Caco-2 (cell line): ENCODE measurements at regions of chr6 and their contacts with region 1.

Region 1: GRCh38 chr6:152484806-152485205 is 152.4 kb downstream of the SYNE1 start:
- DNase-seq: no peak
- H3K4me3 ChIP-seq: no peak overlapping the region
- H3K4me3 Mint-ChIP-seq: no peak overlapping the region
- H3K27ac Mint-ChIP-seq: no peak overlapping the region
- H3K4me1 ChIP-seq: no peaks in the 10 kb centered on the region
- H3K4me1 Mint-ChIP-seq: no peaks in the 10 kb centered on the region
- H3K27me3 ChIP-seq: no peaks in the 10 kb centered on the region
- H3K27me3 Mint-ChIP-seq: peaks cover 4% of the 10 kb centered on the region
- CTCF ChIP-seq: no peak

Region 2: DNA sequence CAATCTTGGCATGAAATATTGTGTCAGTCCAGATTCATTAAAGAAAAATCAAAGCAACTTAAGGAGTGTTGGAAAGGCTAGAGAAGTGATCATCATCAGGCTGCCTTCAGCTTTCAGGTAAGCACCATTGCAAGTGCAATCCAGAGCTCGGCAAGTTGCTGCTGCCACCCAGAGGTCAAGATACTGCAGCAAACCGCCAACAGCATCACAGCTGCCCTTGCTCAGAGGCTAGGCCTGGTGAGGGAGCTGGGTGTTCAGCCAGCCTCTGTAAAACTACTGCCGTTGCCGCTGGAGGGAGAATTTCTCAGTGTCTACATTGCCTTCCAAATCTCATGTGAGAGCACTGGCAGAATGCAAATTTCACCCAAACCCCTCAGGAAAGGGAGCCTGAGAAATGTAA is 158.2 kb after region 1 on chr6:
- CTCF ChIA-PET with region 1: interaction called, 4 read pairs
- POLR2A ChIA-PET with region 1: no interaction called
- intact Hi-C with region 1: loop called (anchors 1 kb)
- DNase-seq: peak; percentile 75 to 78
- H3K4me3 ChIP-seq: no peak overlapping the region
- H3K4me3 Mint-ChIP-seq: no peak overlapping the region
- H3K27ac Mint-ChIP-seq: no peak overlapping the region
- H3K4me1 ChIP-seq: no peaks in the 10 kb centered on the region
- H3K4me1 Mint-ChIP-seq: no peaks in the 10 kb centered on the region
- H3K27me3 ChIP-seq: no peaks in the 10 kb centered on the region
- H3K27me3 Mint-ChIP-seq: peaks cover 27% of the 10 kb centered on the region
- CTCF ChIP-seq: peak; percentile 55 to 79

Region 3: DNA sequence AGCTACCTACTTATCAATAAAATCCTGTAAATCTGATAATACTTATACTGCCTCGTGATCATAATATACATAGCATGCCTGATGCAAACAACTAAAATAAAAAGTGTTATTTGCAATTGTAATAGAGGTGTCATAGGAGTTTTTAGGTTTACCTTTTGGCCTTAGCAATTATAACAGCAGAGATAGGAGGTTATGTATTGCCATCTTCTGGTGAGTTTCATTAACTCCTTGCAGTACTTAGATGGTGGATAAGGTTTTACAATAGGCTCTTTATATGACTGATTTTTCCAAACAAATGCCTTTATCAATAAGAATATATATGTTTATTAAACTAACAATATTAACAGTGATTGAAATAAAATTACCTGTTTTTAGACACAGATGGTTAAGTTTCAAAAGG is 185.1 kb after region 1 on chr6:
- CTCF ChIA-PET with region 1: no interaction called
- POLR2A ChIA-PET with region 1: no interaction called
- intact Hi-C with region 1: loop called (anchors 1 kb)
- DNase-seq: peak in 1 of 2 experiments; percentile 5
- H3K4me3 ChIP-seq: no peak overlapping the region
- H3K4me3 Mint-ChIP-seq: no peak overlapping the region
- H3K27ac Mint-ChIP-seq: no peak overlapping the region
- H3K4me1 ChIP-seq: no peaks in the 10 kb centered on the region
- H3K4me1 Mint-ChIP-seq: no peaks in the 10 kb centered on the region
- H3K27me3 ChIP-seq: no peaks in the 10 kb centered on the region
- H3K27me3 Mint-ChIP-seq: peaks cover 13% of the 10 kb centered on the region
- CTCF ChIP-seq: peak in 1 of 2 experiments; percentile 36

Region 4: GRCh38 chr6:152897799-152898399 is 413.1 kb after region 1 on chr6:
- CTCF ChIA-PET with region 1: no interaction called
- POLR2A ChIA-PET with region 1: no interaction called
- intact Hi-C with region 1: loop called (anchors 2 kb)
- DNase-seq: peak; percentile 65 to 82
- H3K4me3 ChIP-seq: no peak overlapping the region
- H3K4me3 Mint-ChIP-seq: no peak overlapping the region
- H3K27ac Mint-ChIP-seq: no peak overlapping the region
- H3K4me1 ChIP-seq: no peaks in the 10 kb centered on the region
- H3K4me1 Mint-ChIP-seq: no peaks in the 10 kb centered on the region
- H3K27me3 ChIP-seq: no peaks in the 10 kb centered on the region
- H3K27me3 Mint-ChIP-seq: peaks cover 14% of the 10 kb centered on the region
- CTCF ChIP-seq: peak; percentile 79 to 88